Activated CD8-positive, alpha-beta T cell treated with anti-CD3 and anti-CD28 coated beads, Interleukin-2, amount 10 ng/mL, durations not matched to agents 7 days and 5 days (primary cell): ENCODE measurements at regions of chr1 and their contacts with region 1.

Region 1: DNA sequence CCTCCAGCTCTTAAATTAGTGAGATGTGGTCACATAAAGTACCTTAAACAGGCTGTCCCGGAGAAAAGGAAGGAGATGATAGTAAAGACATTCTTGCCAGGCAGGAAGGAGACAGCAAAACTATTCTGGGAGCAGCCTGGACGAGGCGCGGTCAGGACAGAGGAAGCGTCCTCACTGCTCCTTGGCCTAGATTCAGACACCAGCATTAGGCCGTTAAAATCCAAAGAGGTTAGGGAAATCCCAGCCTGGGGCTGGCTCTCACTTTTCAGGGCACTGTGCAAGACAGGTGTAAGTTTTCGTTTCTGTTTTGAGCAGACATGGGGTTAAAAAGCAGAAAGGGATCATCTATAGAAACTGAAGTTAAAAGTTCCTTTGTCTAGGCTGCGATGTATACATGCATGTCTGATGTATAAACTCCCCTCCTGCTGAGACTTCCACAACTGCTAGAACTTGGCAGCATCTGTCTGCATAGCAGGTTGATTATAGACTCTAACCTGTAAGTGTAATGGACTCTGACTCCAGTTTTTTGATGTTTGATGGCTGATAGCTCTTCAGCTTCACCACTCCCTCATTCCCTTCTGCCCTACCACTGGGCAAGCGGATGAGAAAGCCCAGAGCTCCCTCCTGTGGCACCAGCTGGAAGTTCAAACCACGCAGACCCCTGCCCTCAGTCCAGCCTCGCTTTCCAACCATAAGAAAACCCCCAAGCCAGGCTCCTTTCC is 21.5 kb downstream of the STPG1 start:
- DNase-seq: peak; percentile 65
- ATAC-seq: peak; percentile 71
- H3K4me3 Mint-ChIP-seq: peak overlapping the region; percentile 67
- H3K27ac Mint-ChIP-seq: peak overlapping the region; percentile 87
- H3K4me1 Mint-ChIP-seq: peaks cover 26% of the 10 kb centered on the region
- H3K27me3 Mint-ChIP-seq: no peaks in the 10 kb centered on the region

Region 2: GRCh38 chr1:24070821-24071393 is 321.1 kb before region 1 on chr1:
- CTCF ChIA-PET with region 1: interaction called, 14 read pairs
- POLR2A ChIA-PET with region 1: no interaction called
- DNase-seq: peak; percentile 81
- ATAC-seq: peak; percentile 88
- H3K4me3 Mint-ChIP-seq: no peak overlapping the region
- H3K27ac Mint-ChIP-seq: no peak overlapping the region
- H3K4me1 Mint-ChIP-seq: peaks cover 2% of the 10 kb centered on the region
- H3K27me3 Mint-ChIP-seq: peaks cover 6% of the 10 kb centered on the region

Region 3: DNA sequence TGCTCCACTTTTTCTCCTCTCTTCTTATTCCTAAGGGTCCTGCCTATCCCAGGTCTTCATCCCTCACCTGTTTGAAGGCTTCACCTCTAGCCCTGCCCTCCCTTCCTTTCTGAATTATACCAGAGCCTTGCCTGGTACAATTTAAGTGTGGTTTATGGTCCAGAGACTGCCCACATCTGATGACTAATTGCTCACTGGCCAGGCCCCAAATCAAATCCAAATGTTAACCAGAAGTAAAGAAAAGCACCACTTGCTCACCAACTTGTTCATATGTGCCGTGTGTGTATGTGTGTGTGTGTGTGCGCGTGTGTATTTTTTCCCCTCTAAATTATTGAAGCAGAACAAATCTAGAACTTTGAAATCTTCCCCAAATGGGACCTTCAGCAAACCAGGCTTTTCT is 306.5 kb before region 1 on chr1:
- CTCF ChIA-PET with region 1: no interaction called
- POLR2A ChIA-PET with region 1: no interaction called
- DNase-seq: no peak
- ATAC-seq: no peak
- H3K4me3 Mint-ChIP-seq: no peak overlapping the region
- H3K27ac Mint-ChIP-seq: no peak overlapping the region
- H3K4me1 Mint-ChIP-seq: no peaks in the 10 kb centered on the region
- H3K27me3 Mint-ChIP-seq: peaks cover 6% of the 10 kb centered on the region

Region 4: DNA sequence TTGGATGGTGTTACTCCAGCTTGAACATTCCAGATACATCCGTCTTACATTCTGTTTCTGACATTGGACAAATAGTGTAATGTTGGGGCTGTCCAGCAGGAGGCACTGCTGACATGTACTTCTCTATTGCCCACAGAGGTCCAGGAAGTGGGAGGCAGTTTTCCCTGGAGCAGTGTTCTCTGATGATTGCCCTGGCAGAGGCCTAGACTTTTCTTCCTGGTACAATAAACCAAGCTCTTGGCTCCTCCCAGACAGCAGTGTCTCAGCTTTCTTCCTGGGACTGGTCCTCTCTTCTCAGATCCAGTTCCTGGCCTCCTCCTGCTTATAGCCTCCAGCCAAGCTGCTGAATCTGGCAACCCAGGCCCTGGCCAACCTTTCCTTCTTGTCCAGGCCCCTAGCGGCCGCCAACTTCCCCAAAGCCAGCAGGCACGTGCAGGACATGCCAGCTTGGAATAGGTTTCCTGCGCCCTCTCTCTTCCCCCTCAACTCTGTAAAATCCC is 190.1 kb before region 1 on chr1:
- CTCF ChIA-PET with region 1: interaction called, 375 read pairs
- POLR2A ChIA-PET with region 1: interaction called, 18 read pairs
- DNase-seq: peak; percentile 72
- ATAC-seq: peak; percentile 24
- H3K4me3 Mint-ChIP-seq: no peak overlapping the region
- H3K27ac Mint-ChIP-seq: no peak overlapping the region
- H3K4me1 Mint-ChIP-seq: peaks cover 9% of the 10 kb centered on the region
- H3K27me3 Mint-ChIP-seq: peaks cover 10% of the 10 kb centered on the region

Region 5: DNA sequence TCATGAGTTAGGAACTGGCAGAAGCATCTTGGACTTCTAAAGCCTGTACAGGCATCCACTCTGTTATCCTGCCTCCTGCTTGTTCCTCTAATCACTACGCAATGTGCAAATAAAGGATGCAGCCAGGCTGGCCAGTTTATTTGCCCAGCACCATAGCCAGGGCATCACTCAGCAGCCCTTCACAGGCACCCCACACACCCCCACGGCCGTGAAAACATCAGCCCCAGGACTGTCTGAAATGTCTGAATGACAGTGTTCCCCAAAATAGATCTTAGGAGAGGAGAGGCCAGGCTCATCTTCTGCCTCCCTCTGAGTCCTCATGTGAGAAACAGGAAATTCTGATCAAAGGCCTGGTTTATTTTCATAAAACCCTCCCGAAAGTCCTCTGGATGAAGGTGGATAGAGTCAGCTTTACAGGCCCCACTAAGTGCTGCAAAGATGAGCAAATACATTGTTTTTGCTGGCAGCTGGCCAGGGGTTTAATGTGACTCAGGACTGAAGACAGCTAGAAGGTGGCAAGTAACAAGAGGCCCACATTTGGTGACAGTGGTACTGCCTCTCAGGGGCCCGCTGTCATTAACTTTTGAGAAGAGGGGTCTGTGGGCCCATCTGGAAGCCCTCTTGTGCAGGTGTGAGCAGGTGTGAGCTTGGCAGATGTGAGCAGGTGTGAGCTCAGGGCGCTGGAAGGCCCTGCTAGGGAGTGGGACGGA is 40.0 kb before region 1 on chr1:
- CTCF ChIA-PET with region 1: interaction called, 20 read pairs
- POLR2A ChIA-PET with region 1: no interaction called
- DNase-seq: no peak
- ATAC-seq: no peak
- H3K4me3 Mint-ChIP-seq: no peak overlapping the region
- H3K27ac Mint-ChIP-seq: no peak overlapping the region
- H3K4me1 Mint-ChIP-seq: peaks cover 22% of the 10 kb centered on the region
- H3K27me3 Mint-ChIP-seq: no peaks in the 10 kb centered on the region

Region 6: DNA sequence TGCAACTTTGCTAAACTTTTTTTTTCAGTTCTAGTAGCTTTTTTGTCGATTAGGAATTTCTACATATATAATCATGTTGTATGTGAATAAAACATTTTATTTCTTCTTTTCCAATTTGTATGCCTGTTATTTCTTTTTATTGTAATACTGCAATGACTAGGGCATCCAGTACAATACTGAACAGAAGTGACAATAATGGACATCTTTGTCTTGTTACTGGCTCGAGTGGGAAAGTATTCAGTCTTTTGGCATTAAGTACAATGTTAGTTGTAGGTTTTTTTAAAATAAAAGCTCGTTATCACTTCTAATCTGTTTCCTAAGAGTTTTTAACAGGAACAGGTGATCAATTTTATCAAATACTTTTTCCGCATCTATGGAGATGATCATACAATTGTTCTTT is 11.8 kb after region 1 on chr1:
- CTCF ChIA-PET with region 1: interaction called, 133 read pairs
- POLR2A ChIA-PET with region 1: no interaction called
- DNase-seq: no peak
- ATAC-seq: no peak
- H3K4me3 Mint-ChIP-seq: no peak overlapping the region
- H3K27ac Mint-ChIP-seq: no peak overlapping the region
- H3K4me1 Mint-ChIP-seq: no peaks in the 10 kb centered on the region
- H3K27me3 Mint-ChIP-seq: no peaks in the 10 kb centered on the region

Region 7: DNA sequence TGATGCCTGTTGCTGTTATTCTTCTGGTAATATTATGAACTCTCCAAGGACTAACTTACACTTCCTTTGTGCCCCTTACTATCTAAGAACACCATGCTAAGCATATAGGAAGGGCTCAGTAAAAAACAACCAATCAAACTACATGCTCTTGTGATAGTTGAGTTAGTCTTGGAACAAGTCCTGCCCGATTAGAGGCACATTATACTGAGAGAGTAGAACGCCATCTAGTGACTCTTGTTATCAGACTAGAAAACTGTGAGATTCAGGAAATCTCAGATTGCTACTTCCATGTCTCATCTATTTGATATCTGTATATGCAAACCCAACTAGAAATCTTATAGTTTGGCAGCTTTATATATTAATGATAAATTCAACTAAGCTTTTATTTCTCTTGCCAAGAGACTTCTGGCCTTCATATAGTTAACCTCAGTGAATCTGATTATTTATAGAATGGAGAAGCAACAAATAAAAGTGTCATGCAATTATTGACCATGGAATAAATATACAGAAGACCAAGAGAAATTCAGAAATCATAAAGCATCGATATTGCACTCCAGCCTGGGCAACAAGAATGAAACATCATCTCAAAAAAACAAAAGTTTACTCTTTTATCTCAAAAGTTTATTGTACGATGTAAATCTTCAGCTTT is 243.3 kb after region 1 on chr1:
- CTCF ChIA-PET with region 1: interaction called, 13 read pairs
- POLR2A ChIA-PET with region 1: no interaction called
- DNase-seq: no peak
- ATAC-seq: peak; percentile 84
- H3K4me3 Mint-ChIP-seq: no peak overlapping the region
- H3K27ac Mint-ChIP-seq: no peak overlapping the region
- H3K4me1 Mint-ChIP-seq: peaks cover 5% of the 10 kb centered on the region
- H3K27me3 Mint-ChIP-seq: peaks cover 14% of the 10 kb centered on the region